ENCODE measurements at regions of chr9 and their contacts with region 1.

Region 1: DNA sequence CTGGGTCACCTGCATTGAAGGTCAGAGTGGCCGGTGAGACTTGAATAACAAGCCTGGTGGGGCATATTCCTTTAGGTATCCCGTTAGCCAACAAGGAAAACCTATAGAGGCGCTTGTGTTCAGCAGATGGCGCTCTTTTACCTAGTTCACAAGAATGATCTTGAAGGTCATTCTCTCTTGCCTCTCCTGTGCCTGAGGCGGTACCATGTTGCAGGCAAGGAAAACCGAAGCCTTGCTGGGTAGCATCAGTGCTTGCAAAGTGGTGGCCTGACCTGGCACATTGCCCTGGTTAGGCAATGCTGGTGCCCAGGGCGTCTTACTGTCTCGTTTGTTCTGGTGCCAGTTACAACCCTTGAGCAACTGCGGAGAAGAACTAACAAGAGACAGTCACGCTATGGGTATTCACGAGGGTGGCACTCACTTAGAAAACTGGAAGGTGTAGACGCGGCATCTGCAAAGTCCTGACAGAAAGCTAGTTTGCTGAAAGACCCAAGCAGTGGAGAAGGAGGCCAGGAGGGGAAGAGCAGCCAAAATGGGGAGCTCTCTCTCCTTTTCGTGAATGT is 56.7 kb downstream of the AOPEP start:
- DNase-seq: peak; percentile 72 to 79 (median 75)
- H3K4me3 ChIP-seq: no peak overlapping the region
- H3K27ac ChIP-seq: no peak overlapping the region
- H3K4me1 ChIP-seq: peaks cover 0 to 4% (median 0%) of the 10 kb centered on the region in 4 experiments
- H3K27me3 ChIP-seq: no peaks in the 10 kb centered on the region

Region 2: DNA sequence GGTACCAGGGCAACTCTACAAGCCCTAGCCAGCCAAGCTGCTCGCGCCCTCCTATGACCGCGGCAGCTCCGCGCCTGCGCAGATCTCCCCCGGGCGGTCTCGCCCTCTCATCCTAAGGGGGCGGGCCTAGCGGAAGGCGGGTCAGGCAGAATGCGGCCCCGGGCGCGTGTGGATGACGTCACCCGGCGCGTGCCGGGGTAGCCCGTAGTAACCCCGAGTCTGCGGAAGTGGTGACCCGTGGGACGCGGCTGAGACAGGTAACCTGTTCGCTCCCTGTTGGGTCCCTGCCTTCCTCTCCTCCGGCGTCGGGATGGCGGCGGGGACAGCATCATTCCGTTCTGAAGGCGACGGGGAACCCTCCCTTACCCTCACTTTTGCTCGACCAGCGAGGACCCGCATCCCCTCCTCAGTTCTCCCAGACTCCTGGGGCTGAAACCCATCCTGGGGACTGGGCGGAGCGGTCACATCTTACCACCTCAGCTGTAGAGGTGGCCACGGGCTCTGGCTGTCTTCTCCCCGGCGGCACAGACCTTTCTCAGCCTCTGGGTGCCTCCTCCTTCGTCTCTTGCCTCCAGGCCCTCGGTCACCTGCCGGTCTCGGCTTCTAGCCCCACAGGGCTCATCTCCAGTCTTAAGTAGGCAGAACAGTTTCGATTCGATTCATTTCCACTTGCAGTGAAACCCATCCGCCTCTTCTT is 56.5 kb before region 1 on chr9 and contains the start of gene AOPEP:
- CTCF ChIA-PET with region 1: no interaction called
- POLR2A ChIA-PET with region 1: no interaction called
- DNase-seq: peak; percentile 96 to 98 (median 97)
- H3K4me3 ChIP-seq: peak within 1 kb of the TSS; percentile 85 to 98 (median 91)
- H3K27ac ChIP-seq: peak within 1 kb of the TSS; percentile 89 to 94
- H3K4me1 ChIP-seq: peaks cover 5 to 17% (median 9%) of the 10 kb centered on the region in 4 experiments
- H3K27me3 ChIP-seq: no peaks in the 10 kb centered on the region

Region 3: GRCh38 chr9:94767331-94768072 is 15.7 kb before region 1 on chr9:
- CTCF ChIA-PET with region 1: interaction called, 13 read pairs
- POLR2A ChIA-PET with region 1: no interaction called
- DNase-seq: no peak
- H3K4me3 ChIP-seq: no peak overlapping the region
- H3K27ac ChIP-seq: no peak overlapping the region
- H3K4me1 ChIP-seq: no peaks in the 10 kb centered on the region
- H3K27me3 ChIP-seq: no peaks in the 10 kb centered on the region

Region 4: GRCh38 chr9:94805585-94805984 is 22.4 kb after region 1 on chr9:
- CTCF ChIA-PET with region 1: interaction called, 21 read pairs
- POLR2A ChIA-PET with region 1: no interaction called
- DNase-seq: peak; percentile 25 to 73 (median 61)
- H3K4me3 ChIP-seq: peak overlapping the region in 2 of 7 experiments; percentile 13 to 39
- H3K27ac ChIP-seq: peak overlapping the region; percentile 92
- H3K4me1 ChIP-seq: peaks cover 17 to 50% (median 25%) of the 10 kb centered on the region in 4 experiments
- H3K27me3 ChIP-seq: no peaks in the 10 kb centered on the region

Region 5: DNA sequence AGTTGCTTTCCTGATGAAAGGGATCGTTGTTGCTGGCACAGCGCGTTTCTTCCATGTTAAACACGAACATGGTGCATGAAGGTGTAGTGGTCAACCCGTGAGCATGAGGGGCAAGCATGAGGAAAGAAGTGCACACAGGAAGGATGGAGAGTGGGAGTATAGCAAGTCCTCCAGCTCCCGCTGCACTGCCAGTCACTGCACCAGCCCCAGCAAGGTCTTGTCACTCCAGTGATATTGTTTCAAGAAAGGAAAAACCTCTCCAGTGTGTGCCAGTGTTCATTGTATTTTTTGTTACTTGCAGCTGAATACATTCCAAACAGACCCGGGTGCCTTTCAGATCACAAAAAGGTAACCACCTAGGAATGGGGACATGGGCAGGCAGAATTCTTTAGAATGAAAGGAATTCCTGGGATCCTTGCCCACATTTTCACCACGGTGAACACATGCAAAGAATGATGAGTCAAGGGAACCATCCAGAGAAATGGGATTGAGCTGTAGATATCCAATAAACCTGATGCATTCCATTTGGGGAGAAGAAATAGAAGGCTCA is 129.6 kb after region 1 on chr9:
- CTCF ChIA-PET with region 1: interaction called, 97 read pairs
- POLR2A ChIA-PET with region 1: no interaction called
- DNase-seq: no peak
- H3K4me3 ChIP-seq: no peak overlapping the region
- H3K27ac ChIP-seq: no peak overlapping the region
- H3K4me1 ChIP-seq: peaks cover 0 to 2% (median under 1%) of the 10 kb centered on the region in 4 experiments
- H3K27me3 ChIP-seq: no peaks in the 10 kb centered on the region

Region 6: GRCh38 chr9:95127249-95128176 is 344.3 kb after region 1 on chr9:
- CTCF ChIA-PET with region 1: interaction called, 58 read pairs
- POLR2A ChIA-PET with region 1: no interaction called
- DNase-seq: peak; percentile 61 to 76 (median 75)
- H3K4me3 ChIP-seq: peak overlapping the region in 4 of 7 experiments; percentile 13 to 71 (median 44)
- H3K27ac ChIP-seq: no peak overlapping the region
- H3K4me1 ChIP-seq: peaks cover 0 to 6% (median 1%) of the 10 kb centered on the region in 4 experiments
- H3K27me3 ChIP-seq: no peaks in the 10 kb centered on the region

Measured in common myeloid progenitor, CD34-positive (primary cell).